PC-3 (cell line): ENCODE measurements at regions of chr3 and their contacts with region 1.

Region 1: DNA sequence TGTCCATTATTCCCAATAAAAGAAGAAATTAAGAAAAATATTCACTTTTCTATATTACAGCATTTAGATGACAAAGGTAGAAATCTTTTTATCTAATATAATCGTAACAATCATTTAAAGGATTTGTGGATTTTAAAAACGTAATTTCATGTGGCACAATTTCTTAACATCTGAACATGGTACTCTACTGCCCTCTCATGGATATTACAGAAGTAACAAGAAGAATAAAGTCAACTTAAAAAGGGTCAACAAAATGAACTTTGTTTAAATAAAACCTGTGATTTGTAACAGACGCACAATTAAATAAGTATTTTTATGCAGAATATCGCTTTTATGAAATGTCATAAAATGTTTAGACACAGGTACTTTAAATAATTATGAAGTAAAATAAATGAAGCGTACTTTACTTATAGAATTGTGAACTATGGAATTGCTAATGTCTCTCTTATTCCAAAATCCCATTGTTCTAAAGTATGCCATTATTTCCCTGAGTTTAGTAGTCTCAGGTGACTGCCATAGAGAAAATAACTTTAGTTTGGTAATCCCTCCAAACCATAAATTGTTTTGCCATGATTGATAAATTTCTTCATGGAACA is 366.8 kb upstream of the ZNF385D start:
- DNase-seq: peak; percentile 72
- ATAC-seq: no peak
- H3K4me3 ChIP-seq: no peak overlapping the region
- H3K27ac ChIP-seq: no peak overlapping the region
- H3K4me1 ChIP-seq: peaks cover 37% of the 10 kb centered on the region
- H3K27me3 ChIP-seq: no peaks in the 10 kb centered on the region
- CTCF ChIP-seq: peak; percentile 88

Region 2: DNA sequence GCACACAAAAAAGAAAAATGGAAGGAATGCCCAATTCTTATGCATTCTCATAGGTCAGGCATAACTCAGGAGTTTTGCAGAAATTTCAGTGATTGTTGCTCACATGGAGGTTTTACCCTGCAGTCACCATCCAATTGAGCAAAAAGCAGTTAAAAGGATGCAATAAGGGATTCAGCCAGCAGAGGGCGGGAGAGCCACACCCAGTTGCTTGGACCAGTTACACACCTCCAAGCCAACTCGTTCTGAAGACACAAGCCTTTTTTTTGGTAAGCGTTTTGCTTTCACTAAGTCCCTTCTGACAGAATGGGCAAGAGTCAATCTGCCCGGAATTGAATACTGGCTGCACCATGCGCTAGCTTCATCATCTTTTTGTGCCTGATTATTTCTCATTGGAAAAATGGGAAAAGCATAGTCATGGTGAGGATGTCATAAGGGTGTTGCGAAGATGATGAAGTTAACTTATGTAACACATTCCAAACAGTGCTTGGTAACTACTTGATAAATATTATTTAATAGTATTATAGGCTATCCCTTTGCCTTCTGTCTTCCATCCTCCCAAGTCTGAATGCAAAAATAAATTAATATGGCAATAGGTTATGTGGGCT is 1777.4 kb before region 1 on chr3:
- CTCF ChIA-PET with region 1: no interaction called
- POLR2A ChIA-PET with region 1: no interaction called
- intact Hi-C with region 1: loop called (anchors 5 kb)
- DNase-seq: peak; percentile 82
- ATAC-seq: peak; percentile 85
- H3K4me3 ChIP-seq: no peak overlapping the region
- H3K27ac ChIP-seq: no peak overlapping the region
- H3K4me1 ChIP-seq: no peaks in the 10 kb centered on the region
- H3K27me3 ChIP-seq: no peaks in the 10 kb centered on the region
- CTCF ChIP-seq: peak; percentile 95

Region 3: GRCh38 chr3:21894459-21895340 is 223.1 kb before region 1 on chr3:
- CTCF ChIA-PET with region 1: interaction called, 4 read pairs
- POLR2A ChIA-PET with region 1: no interaction called
- intact Hi-C with region 1: loop called (anchors 2 kb)
- DNase-seq: peak; percentile 66
- ATAC-seq: no peak
- H3K4me3 ChIP-seq: no peak overlapping the region
- H3K27ac ChIP-seq: no peak overlapping the region
- H3K4me1 ChIP-seq: peaks cover 13% of the 10 kb centered on the region; the same call in 1 of the 2 replicates
- H3K27me3 ChIP-seq: no peaks in the 10 kb centered on the region
- CTCF ChIP-seq: peak; percentile 87

Region 4: GRCh38 chr3:22089284-22089683 is 28.6 kb before region 1 on chr3:
- CTCF ChIA-PET with region 1: interaction called, 9 read pairs
- POLR2A ChIA-PET with region 1: no interaction called
- intact Hi-C with region 1: loop called (anchors 1 kb)
- DNase-seq: peak; percentile 80
- ATAC-seq: peak; percentile 90
- H3K4me3 ChIP-seq: no peak overlapping the region
- H3K27ac ChIP-seq: no peak overlapping the region
- H3K4me1 ChIP-seq: 0 out of 2 replicates have a peak, but pooled peaks cover 4% of the 10 kb centered on the region
- H3K27me3 ChIP-seq: no peaks in the 10 kb centered on the region
- CTCF ChIP-seq: peak; percentile 90

Region 5: DNA sequence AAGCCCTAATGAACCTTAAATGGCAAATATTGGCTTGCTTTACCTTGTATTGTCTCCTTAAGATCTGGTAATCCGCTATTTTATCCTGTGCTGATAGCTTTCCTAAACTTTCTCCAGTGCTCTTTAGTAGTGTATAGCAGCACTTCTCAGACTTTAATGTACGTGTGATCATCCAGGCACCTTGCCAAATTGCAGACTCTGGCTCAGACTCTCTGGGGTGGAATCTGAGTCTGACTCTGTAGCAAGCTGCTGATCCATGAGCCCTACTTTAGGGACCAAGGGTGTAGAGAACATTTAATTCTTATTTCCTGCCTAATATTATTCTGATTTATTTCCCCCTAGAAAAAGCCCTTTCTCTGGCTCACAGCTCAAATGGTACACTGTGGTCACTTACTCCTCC is 152.0 kb after region 1 on chr3:
- CTCF ChIA-PET with region 1: no interaction called
- POLR2A ChIA-PET with region 1: no interaction called
- intact Hi-C with region 1: no loop called
- DNase-seq: peak; percentile 35
- ATAC-seq: no peak; the same call in 1 of the 2 replicates
- H3K4me3 ChIP-seq: no peak overlapping the region
- H3K27ac ChIP-seq: no peak overlapping the region
- H3K4me1 ChIP-seq: no peaks in the 10 kb centered on the region
- H3K27me3 ChIP-seq: no peaks in the 10 kb centered on the region
- CTCF ChIP-seq: no peak

Region 6: DNA sequence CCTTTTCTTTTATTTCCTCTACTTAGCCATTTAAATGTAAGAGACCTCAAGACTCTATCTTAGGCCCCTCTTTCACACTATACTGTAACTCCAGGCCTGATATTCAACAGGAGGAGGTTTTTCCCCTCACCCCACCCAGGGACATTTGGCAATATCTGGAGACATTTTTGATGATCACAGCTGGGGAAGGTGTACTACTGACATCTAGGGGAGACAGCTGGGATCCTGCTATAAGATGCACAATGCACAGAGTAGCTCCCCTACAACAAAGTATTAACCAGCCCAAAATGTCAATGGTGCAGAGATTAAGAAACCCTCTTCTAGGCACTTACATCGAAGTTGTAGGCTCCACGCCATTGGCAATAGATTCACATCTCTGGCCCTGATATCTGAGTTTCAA is 567.7 kb after region 1 on chr3:
- CTCF ChIA-PET with region 1: no interaction called
- POLR2A ChIA-PET with region 1: no interaction called
- intact Hi-C with region 1: loop called (anchors 10 kb)
- DNase-seq: peak; percentile 60
- ATAC-seq: peak; percentile 94
- H3K4me3 ChIP-seq: no peak overlapping the region
- H3K27ac ChIP-seq: no peak overlapping the region
- H3K4me1 ChIP-seq: no peaks in the 10 kb centered on the region
- H3K27me3 ChIP-seq: no peaks in the 10 kb centered on the region
- CTCF ChIP-seq: peak; percentile 87